HEK293 (cell line): ENCODE measurements at regions of chr12 and their contacts with region 1.

Region 1: DNA sequence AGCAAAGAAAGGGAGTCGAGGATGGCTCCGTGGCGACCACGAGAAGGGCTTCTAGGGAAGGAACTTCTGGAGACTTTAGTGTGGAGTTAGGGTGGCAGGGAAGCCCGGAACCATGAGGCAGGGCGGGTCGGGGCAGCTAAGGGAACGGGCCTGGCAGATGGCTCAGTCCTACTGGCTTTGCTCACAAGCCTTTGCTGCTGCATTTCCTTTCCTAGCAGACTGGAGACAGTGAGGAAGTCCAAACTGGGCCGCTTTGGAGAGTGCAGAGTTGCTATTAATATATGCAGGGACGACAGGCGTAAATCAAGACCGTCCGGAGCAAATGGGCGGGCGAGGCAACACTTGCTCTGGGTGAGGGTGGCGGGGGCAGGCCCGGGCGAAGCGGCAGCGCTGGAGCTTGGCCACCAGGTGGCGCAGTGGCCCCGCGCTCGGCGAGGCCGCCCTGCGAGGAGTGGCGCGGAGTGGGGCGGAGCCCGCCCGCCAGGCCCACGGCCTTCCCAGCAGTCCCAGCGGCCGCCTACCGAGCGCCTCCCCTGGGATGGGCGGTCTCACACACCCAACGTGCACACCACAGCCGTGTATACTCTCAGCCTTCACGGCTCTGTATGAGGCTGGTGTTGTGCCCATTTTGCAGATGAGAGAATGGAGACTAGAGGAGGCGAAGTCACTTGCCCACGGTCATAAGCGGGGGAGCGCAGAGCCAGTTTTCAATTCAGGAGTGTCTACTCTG is 24.4 kb upstream of the LRTM2 start:
- H3K4me3 ChIP-seq: peak overlapping the region; percentile 22
- H3K27ac ChIP-seq: no peak overlapping the region
- H3K4me1 ChIP-seq: no peaks in the 10 kb centered on the region; the same call in 1 of the 2 replicates
- CTCF ChIP-seq: peak; percentile 79

Region 2: GRCh38 chr12:1272142-1272541 is 523.8 kb before region 1 on chr12:
- CTCF ChIA-PET with region 1: no interaction called
- POLR2A ChIA-PET with region 1: no interaction called
- H3K4me3 ChIP-seq: no peak overlapping the region
- H3K27ac ChIP-seq: no peak overlapping the region
- H3K4me1 ChIP-seq: no peaks in the 10 kb centered on the region
- CTCF ChIP-seq: no peak

Region 3: DNA sequence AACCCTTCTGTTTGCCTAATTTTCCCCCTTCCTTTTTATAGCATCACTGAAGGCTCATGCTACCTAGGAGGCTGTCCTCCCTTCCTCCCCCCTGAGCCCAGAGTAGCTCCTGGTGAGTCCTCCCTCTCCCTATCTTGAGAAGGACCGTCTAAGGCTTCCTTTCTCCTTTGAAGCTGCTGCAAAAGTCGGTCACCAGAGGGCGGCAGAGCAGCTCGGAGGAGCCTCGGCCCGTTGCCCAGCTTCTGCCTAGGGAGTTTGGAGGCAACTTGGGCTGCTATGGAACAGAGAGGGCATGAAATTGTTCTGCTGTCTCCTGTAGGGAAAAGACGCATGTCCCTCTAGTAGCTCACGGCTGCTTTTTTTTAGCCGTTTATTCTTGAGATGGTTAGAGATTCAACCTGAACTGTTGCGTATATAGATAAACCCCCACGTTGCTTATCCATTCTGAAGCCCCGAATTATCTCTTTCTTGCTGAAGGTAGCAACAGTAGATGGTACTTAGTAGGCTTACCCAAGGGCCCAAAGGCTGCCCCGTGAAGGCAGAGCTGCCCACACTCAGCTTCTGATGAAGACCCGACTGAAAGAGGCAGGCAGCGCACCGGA is 161.3 kb before region 1 on chr12:
- CTCF ChIA-PET with region 1: interaction called, 40 read pairs
- POLR2A ChIA-PET with region 1: interaction called, 5 read pairs
- H3K4me3 ChIP-seq: no peak overlapping the region
- H3K27ac ChIP-seq: no peak overlapping the region
- H3K4me1 ChIP-seq: no peaks in the 10 kb centered on the region; the same call in 1 of the 2 replicates
- CTCF ChIP-seq: peak; percentile 56

Region 4: DNA sequence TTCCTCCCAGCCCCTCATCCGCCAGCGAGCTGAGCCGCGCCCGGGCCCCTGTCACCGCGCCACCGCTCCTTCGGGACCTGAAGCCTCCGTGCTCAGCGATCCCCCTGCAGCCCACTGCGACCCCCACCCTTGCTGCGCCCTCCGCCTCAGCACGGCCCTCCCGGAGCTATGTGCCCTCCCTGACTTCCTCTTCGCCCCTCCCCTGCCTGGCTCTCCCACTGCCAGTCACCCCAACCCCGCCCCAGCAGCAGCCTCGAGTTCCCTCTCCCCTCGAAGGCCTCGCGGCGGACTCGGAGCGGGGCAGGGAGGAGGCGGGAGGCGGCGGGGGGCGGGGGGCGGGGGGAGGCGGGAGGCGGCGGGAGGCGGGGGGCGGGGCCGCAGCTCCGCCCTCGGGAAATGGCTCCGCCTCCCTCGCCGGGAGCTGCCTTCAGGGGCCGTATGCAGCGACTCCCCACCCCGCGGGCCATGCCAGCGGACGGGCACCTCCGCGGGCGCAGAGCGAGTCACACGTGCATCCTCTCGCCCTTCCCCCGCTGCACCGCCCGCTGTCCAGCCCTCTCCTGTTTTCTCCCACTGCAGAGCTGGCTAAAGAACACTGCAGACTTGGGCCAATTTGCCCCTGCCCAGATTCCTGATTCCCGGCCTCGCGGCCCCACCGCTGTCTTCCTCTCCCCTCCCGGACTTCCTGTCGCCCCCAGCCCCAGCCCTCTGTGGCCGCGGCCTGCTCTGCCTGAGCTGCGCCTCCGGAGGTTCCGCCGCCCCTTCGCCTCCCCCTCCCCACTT is 134.2 kb before region 1 on chr12:
- CTCF ChIA-PET with region 1: interaction called, 259 read pairs
- POLR2A ChIA-PET with region 1: interaction called, 4 read pairs
- H3K4me3 ChIP-seq: peak overlapping the region; percentile 45
- H3K27ac ChIP-seq: peak overlapping the region; percentile 37; the same call in 1 of the 2 replicates
- H3K4me1 ChIP-seq: no peaks in the 10 kb centered on the region
- CTCF ChIP-seq: no peak

Region 5: DNA sequence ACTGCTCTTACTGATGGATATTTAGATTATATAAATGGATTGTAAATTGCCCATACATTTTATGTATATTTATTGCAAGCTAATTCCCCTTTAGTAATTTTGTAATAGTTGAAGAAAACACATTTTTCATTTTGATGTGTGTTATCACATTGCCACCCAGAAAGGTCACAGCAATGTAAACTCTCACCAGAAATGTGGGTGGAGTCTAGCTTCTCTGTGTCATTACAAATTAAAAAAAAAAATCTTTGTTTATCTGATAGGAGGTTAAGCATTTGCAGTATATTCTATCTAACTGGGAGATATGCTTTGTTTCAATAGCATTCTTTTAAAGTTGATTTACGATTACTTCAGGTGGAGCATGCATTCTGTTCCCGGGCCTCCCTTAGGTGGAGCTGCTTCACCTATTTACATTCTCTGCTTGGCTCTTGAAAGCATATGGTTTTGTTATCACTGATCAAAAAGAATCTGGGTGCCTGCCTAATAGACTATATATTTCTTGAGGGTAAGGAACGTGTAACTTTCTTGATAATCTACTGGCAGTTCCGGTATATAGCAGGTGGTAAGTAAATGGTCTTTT is 97.2 kb before region 1 on chr12:
- CTCF ChIA-PET with region 1: interaction called, 17 read pairs
- POLR2A ChIA-PET with region 1: no interaction called
- H3K4me3 ChIP-seq: no peak overlapping the region
- H3K27ac ChIP-seq: no peak overlapping the region
- H3K4me1 ChIP-seq: peaks cover 21% of the 10 kb centered on the region
- CTCF ChIP-seq: no peak

Region 6: GRCh38 chr12:1779783-1780182 is 16.2 kb before region 1 on chr12:
- CTCF ChIA-PET with region 1: interaction called, 22 read pairs
- POLR2A ChIA-PET with region 1: no interaction called
- H3K4me3 ChIP-seq: no peak overlapping the region
- H3K27ac ChIP-seq: no peak overlapping the region
- H3K4me1 ChIP-seq: peaks cover 13% of the 10 kb centered on the region; the same call in 1 of the 2 replicates
- CTCF ChIP-seq: no peak

Region 7: GRCh38 chr12:1840981-1841425 is 45.1 kb after region 1 on chr12:
- CTCF ChIA-PET with region 1: no interaction called
- POLR2A ChIA-PET with region 1: no interaction called
- H3K4me3 ChIP-seq: no peak overlapping the region
- H3K27ac ChIP-seq: no peak overlapping the region
- H3K4me1 ChIP-seq: no peaks in the 10 kb centered on the region
- CTCF ChIP-seq: no peak